HAP-1 (cell line): ENCODE measurements at regions of chr11 and their contacts with region 1.

Region 1: DNA sequence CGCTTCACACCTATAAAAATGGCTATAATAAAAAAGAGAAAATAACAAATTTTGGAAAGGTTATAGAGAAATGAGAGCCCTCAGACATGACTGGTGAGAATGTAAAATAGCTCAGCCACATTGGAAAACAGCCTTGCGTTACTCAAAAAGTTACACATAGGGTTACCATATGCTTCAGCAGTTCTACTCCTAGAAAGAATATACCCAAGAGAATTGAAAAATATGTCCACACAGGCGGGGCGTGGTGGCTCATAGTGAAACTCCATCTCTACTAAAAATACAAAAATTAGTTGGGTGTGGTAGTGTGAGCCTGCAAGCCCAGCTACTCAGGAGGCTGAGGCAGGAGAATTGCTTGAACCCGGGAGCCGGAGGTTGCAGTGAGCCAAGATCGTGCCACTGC is 7.6 kb upstream of the JHY start:
- DNase-seq: no peak
- H3K4me3 ChIP-seq: no peak overlapping the region
- H3K4me1 ChIP-seq: peaks cover 10% of the 10 kb centered on the region
- H3K27me3 ChIP-seq: no peaks in the 10 kb centered on the region

Region 2: GRCh38 chr11:123020968-123021367 is 146.0 kb after region 1 on chr11:
- in situ Hi-C with region 1: loop called (anchors 10 kb)
- DNase-seq: peak; percentile 28 to 47
- H3K4me3 ChIP-seq: no peak overlapping the region
- H3K4me1 ChIP-seq: peaks cover 6% of the 10 kb centered on the region
- H3K27me3 ChIP-seq: peaks cover 18% of the 10 kb centered on the region